K562 (cell line): ENCODE measurements at regions of chr1 and their contacts with region 1.

Region 1: DNA sequence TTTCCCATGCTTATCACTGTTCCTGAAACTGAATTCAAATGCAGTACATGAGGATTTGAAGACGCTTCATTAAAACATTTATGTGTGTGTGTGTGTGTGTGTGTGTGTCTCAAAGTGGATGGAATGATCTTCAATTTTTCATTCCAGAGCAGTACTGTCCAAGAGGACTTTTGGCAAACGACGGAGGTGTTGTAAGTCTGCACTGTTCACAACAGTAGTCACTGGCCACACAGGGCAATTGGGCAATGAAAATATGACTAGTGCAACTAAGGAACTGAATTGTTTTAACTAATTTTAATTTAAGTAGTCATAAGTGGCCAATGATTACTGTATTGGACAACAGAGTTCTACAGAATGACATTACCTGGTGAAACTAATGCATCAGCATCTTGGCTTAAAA is 5.0 kb downstream of the TAF5L start:
- DNase-seq: no peak
- ATAC-seq: no peak
- H3K4me3 ChIP-seq: no peak overlapping the region
- H3K27ac ChIP-seq: no peak overlapping the region
- H3K4me1 ChIP-seq: peaks cover 9 to 35% of the 10 kb centered on the region in 2 experiments; a peak in 4 of 5 replicates
- H3K27me3 ChIP-seq: no peaks in the 10 kb centered on the region
- CTCF ChIP-seq: no peak
- EP300 ChIP-seq: no peak
- POLR2A ChIP-seq: no peak
- RAD21 ChIP-seq: no peak

Region 2: GRCh38 chr1:229572286-229572685 is 48.6 kb before region 1 on chr1:
- CTCF ChIA-PET with region 1: no interaction called
- POLR2A ChIA-PET with region 1: no interaction called
- in situ Hi-C with region 1: no loop called
- intact Hi-C with region 1: loop called (anchors 5 kb)
- DNase-seq: no peak
- ATAC-seq: peak; percentile 46
- H3K4me3 ChIP-seq: no peak overlapping the region
- H3K27ac ChIP-seq: no peak overlapping the region
- H3K4me1 ChIP-seq: peaks cover 0 to 7% of the 10 kb centered on the region in 2 experiments; a peak in 2 of 5 replicates
- H3K27me3 ChIP-seq: peaks cover 2 to 14% of the 10 kb centered on the region in 2 experiments; a peak in 2 of 5 replicates
- CTCF ChIP-seq: no peak
- EP300 ChIP-seq: no peak
- POLR2A ChIP-seq: no peak
- RAD21 ChIP-seq: no peak